Motor neuron (in vitro differentiated cells): ENCODE measurements at regions of chr14 and their contacts with region 1.

Region 1: GRCh38 chr14:29521526-29522137 is 406.0 kb downstream of the PRKD1 start:
- ATAC-seq: no peak
- H3K4me3 ChIP-seq: no peak overlapping the region
- H3K27ac ChIP-seq: no peak overlapping the region
- H3K4me1 ChIP-seq: no peaks in the 10 kb centered on the region

Region 2: DNA sequence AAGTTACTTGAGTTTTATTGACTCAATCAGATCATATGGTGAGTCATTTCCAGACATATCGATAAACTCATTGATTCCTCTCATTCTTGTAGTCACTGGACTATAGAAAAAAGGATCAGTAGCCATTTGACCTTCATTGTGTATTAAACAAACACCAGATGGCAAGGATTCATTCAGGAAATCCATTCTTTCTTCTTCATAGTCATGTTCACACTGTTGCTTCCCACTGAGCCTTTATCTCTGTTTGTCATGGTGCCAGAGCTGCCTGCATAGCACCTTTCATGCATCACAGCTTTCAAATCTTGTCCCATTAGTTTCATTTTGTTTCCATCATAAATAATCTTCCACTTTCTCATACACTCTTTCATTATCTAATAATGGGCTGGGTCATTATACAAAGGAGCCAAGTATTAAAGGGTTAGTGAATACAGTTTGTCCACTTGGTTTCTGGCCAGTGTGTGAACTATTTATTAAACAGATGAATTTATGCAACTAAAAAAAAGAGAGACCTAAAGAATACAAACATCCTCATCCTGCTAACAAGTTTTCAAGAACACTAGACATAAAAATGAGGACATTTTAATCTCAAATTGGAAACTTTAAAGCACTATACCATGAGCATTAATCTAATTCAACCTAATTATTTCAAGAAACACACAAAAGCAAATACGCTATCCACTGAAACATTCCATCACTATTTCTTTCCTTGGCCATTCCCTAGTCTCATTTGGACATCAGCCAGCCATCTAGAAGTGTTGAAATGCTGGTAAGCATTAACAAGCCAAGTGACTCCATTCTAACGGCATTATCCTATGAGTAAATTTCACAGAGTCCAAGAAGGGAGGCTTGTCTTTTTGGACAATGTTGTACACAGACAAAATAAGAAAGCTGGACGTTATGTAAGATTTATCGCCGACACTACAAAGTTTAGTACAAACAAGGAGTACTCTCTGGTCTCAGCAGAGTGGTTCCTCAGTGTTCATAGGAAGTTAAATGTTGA is 278.6 kb before region 1 on chr14:
- in situ Hi-C with region 1: loop called in 1 of 9 experiments (anchors 25 kb)
- ATAC-seq: peak in 5 of 8 experiments; percentile 24 to 64 (median 53)
- H3K4me3 ChIP-seq: no peak overlapping the region
- H3K27ac ChIP-seq: no peak overlapping the region
- H3K4me1 ChIP-seq: peaks cover 0 to 10% of the 10 kb centered on the region in 2 donors

Region 3: DNA sequence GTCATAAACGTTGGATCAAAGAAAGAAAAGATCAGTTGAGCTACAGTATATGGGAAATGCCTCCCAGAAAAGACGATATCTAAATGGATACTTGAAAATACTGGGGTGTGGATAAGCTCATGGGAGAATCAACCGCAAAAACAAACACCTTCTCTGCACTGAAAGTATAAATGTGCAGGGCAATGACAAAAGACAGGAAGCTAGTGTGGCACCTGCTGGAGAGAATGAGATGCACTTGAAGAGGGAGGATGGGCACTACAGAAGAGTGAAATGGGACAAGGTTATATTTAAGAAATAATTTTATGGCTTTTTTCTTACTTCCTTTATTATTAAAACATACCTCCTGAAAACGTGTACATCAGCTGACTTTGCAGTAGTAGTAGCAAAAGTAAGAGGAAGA is 252.4 kb after region 1 on chr14:
- in situ Hi-C with region 1: no loop called
- ATAC-seq: no peak
- H3K4me3 ChIP-seq: no peak overlapping the region
- H3K27ac ChIP-seq: no peak overlapping the region
- H3K4me1 ChIP-seq: no peaks in the 10 kb centered on the region